ENCODE measurements at regions of chr10 and their contacts with region 1.

Region 1: DNA sequence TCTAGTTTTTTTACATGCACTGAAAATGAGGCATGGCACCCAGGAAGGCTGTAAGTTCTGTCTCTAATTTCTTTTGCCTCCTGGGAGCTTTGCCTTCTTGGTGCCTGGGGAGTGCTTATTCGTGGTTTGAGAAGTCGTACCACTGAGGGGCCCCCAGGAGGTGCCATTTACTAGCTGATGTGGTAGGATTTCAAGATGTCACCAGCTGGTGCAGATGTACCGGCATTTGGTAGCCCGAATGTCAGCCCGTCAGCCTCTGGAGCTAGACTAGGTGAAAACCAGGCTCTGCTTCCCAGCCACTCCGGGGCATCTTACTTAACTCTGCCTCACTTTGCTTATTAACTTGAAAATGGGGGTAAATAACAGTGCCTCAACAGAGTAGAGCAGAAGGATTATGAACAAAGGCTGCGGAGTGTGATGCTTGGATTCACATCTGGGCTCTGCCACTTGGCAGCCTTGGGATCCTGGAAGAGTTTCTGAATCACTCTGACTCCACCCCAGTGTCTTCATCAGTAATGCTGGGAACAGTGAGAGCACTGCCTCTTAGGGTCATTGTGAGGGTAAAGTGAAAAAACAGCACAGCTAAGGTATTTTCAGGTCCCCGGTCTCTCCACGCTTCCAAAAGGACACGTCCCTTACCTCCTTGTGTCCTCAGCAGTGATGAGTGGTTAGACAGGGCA is 31.4 kb upstream of the BTBD16 start:
- DNase-seq: no peak
- H3K4me3 ChIP-seq: no peak overlapping the region
- H3K27ac ChIP-seq: no peak overlapping the region
- H3K4me1 ChIP-seq: peaks cover 0 to 9% of the 10 kb centered on the region in 2 donors
- H3K27me3 ChIP-seq: no peaks in the 10 kb centered on the region
- CTCF ChIP-seq: no peak
- POLR2A ChIP-seq: no peak

Region 2: DNA sequence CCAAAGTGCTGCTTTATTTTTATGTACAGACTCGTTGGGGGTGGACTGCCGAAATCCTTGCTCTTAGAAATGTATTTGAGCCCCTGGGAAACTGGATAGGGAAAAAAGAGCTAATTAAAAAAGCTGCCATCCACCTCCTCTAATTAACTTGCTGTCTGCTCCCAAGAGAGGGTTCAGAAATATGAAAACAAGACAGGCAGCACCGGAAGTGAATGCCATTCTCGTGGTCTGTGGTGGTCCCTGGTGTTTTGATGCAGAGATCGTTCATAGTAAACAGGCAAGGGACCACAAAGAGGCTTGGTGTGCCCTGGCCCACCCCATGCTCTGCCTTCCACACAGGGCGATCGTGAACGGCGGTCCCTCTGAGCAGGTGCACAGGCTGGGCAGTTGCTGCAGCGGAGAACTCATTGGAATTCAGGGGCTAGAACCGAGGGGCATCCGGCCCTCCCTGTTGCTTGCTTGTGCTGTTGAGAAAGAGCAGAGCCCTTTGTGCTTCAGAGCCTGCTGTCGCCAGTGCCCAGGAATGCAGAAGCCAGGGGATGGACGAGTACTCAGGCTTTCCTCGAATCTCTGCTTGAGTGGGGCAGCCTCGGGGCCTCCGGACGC is 47.7 kb before region 1 on chr10:
- intact Hi-C with region 1: loop called (anchors 10 kb)
- DNase-seq: peak in 1 of 2 donors; percentile 33
- H3K4me3 ChIP-seq: no peak overlapping the region
- H3K27ac ChIP-seq: no peak overlapping the region
- H3K4me1 ChIP-seq: peaks cover 22 to 24% of the 10 kb centered on the region in 2 donors
- H3K27me3 ChIP-seq: no peaks in the 10 kb centered on the region
- CTCF ChIP-seq: no peak
- POLR2A ChIP-seq: no peak

Region 3: GRCh38 chr10:122487174-122487765 is 247.6 kb after region 1 on chr10:
- intact Hi-C with region 1: no loop called
- DNase-seq: peak; percentile 36 to 41
- H3K4me3 ChIP-seq: no peak overlapping the region
- H3K27ac ChIP-seq: no peak overlapping the region
- H3K4me1 ChIP-seq: peaks cover 0 to 14% of the 10 kb centered on the region in 2 donors
- H3K27me3 ChIP-seq: no peaks in the 10 kb centered on the region
- CTCF ChIP-seq: no peak
- POLR2A ChIP-seq: no peak

Measured in thyroid gland (tissue), 4 donors.